ENCODE measurements at regions of chr13 and their contacts with region 1.

Region 1: GRCh38 chr13:95156208-95156607 is 145.0 kb downstream of the ABCC4 start:
- DNase-seq: no peak
- ATAC-seq: no peak
- H3K4me3 ChIP-seq: no peak overlapping the region
- H3K27ac ChIP-seq: no peak overlapping the region
- H3K4me1 ChIP-seq: no peaks in the 10 kb centered on the region
- H3K27me3 ChIP-seq: no peaks in the 10 kb centered on the region
- CTCF ChIP-seq: peak in 1 of 3 experiments; percentile 38; a peak in 1 of 6 replicates
- POLR2A ChIP-seq: no peak
- RAD21 ChIP-seq: peak; percentile 46

Region 2: GRCh38 chr13:94435604-94436226 is 720.5 kb before region 1 on chr13:
- CTCF ChIA-PET with region 1: no interaction called
- POLR2A ChIA-PET with region 1: no interaction called
- RAD21 ChIA-PET with region 1: no interaction called
- intact Hi-C with region 1: loop called (anchors 10 kb)
- DNase-seq: peak; percentile 34
- ATAC-seq: peak; percentile 79
- H3K4me3 ChIP-seq: no peak overlapping the region
- H3K27ac ChIP-seq: no peak overlapping the region
- H3K4me1 ChIP-seq: no peaks in the 10 kb centered on the region
- H3K27me3 ChIP-seq: peaks cover 21% of the 10 kb centered on the region; the same call in 1 of the 2 replicates
- CTCF ChIP-seq: peak; percentile 38 to 67 (median 47); a peak in 5 of 6 replicates
- POLR2A ChIP-seq: no peak
- RAD21 ChIP-seq: peak; percentile 75

Region 3: DNA sequence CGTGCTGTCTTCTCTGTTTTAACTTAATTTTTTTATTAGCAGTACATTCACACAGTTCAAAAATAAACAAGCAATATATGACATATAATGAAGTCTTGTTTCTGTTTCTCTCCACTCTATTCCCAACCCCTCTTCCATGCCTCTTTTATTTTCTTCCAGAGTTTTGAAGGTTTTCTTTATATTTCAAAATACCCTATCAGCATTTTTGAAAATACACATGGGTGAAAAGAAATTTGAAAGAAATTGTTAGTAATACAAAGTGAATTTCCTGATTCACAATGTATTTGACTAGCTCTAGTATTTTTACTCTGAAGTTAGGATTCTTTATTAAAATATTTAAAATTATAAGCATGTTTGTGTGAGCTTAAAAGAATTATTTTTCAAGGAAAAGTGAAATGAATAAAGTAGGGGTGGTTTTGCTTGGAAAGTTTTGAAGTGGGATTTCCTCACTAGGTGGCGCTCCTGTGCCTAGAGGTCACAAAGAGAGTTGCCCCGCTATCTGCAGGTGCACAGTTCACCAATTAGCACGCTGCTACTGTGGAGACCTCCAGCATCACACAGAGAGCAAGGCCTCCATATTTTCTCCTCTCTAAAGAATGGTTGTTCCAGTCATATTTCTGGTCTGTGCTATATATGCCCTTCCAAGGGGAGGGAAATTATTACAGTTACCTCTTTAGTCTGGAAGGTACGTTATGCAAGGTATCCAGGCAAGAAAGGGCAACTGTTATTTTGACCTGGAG is 481.4 kb before region 1 on chr13:
- CTCF ChIA-PET with region 1: interaction called, 8 read pairs
- POLR2A ChIA-PET with region 1: no interaction called
- RAD21 ChIA-PET with region 1: no interaction called
- intact Hi-C with region 1: loop called (anchors 1 kb)
- DNase-seq: peak; percentile 54
- ATAC-seq: peak; percentile 92
- H3K4me3 ChIP-seq: no peak overlapping the region
- H3K27ac ChIP-seq: no peak overlapping the region
- H3K4me1 ChIP-seq: no peaks in the 10 kb centered on the region
- H3K27me3 ChIP-seq: peaks cover 21% of the 10 kb centered on the region; the same call in 1 of the 2 replicates
- CTCF ChIP-seq: peak; percentile 36 to 80 (median 72); a peak in 5 of 6 replicates
- POLR2A ChIP-seq: no peak
- RAD21 ChIP-seq: peak; percentile 63

Region 4: GRCh38 chr13:95117092-95117491 is 39.1 kb before region 1 on chr13:
- CTCF ChIA-PET with region 1: no interaction called
- POLR2A ChIA-PET with region 1: no interaction called
- RAD21 ChIA-PET with region 1: no interaction called
- intact Hi-C with region 1: no loop called
- DNase-seq: no peak
- ATAC-seq: no peak
- H3K4me3 ChIP-seq: no peak overlapping the region
- H3K27ac ChIP-seq: no peak overlapping the region
- H3K4me1 ChIP-seq: no peaks in the 10 kb centered on the region
- H3K27me3 ChIP-seq: no peaks in the 10 kb centered on the region
- CTCF ChIP-seq: no peak
- POLR2A ChIP-seq: no peak
- RAD21 ChIP-seq: no peak

Region 5: DNA sequence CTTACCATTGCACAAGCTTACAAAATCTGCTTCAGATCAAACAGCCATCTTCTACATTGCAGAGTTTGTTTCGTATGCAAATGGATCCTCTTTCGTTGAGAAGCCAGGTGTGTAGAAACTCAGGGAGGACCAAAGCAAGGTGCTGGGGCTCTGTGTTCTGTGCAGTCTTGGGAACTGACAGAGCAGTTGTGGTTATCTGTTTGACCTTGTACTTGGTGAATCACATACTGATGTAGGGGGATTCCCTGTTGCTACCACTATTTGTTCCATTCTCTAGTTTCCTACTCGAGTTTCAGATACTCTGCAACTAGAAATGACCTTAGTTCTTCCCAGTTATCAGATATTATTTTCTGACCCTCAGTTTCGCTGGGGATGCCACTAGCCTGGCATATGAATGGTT is 301.1 kb after region 1 on chr13:
- CTCF ChIA-PET with region 1: no interaction called
- POLR2A ChIA-PET with region 1: no interaction called
- RAD21 ChIA-PET with region 1: no interaction called
- intact Hi-C with region 1: no loop called
- DNase-seq: no peak
- ATAC-seq: no peak
- H3K4me3 ChIP-seq: no peak overlapping the region
- H3K27ac ChIP-seq: no peak overlapping the region
- H3K4me1 ChIP-seq: no peaks in the 10 kb centered on the region
- H3K27me3 ChIP-seq: no peaks in the 10 kb centered on the region
- CTCF ChIP-seq: no peak
- POLR2A ChIP-seq: no peak
- RAD21 ChIP-seq: no peak

Measured in HCT116 (cell line).